Right ventricle myocardium inferior (tissue), 1 donor: ENCODE measurements at regions of chr4 and their contacts with region 1.

Region 1: GRCh38 chr4:138182838-138183426 is 59.2 kb downstream of the SLC7A11 start:
- DNase-seq: no peak
- ATAC-seq: peak; percentile 44

Region 2: DNA sequence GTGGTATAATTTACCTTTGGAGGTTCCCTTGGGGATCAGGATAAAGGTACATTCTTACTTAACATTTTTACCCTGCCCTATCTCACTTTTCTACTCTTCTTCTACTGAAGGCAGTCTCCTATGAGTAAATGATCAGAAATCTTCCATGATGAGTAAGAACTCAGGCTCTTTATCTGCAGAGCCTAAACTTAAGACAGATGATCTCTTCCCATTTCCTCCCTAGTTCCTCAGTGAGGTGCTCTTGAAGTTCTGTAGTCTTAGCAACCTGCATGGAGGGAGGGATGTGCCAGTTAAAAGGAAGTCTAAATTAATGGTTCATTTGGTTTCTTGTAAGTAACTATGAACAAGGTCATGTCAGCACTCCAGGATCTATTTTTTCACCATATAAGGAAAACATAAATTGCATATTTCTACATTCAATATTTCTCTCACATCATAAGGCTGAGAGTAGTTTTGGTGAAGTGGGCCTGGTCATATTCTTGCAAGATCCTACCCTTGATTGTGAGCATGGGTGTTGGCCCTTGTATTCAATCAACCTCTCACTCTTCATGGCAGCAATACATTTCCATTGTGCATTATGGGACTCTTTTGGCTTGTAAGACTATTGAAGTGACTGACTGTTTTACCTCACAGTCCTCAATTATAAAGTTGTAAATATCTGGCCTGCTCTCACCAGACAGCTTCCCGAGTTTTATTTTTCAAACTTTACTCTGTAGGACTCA is 236.3 kb before region 1 on chr4:
- intact Hi-C with region 1: no loop called
- DNase-seq: no peak
- ATAC-seq: no peak

Region 3: GRCh38 chr4:138494931-138495330 is 312.0 kb after region 1 on chr4:
- intact Hi-C with region 1: loop called (anchors 5 kb)
- DNase-seq: no peak
- ATAC-seq: peak; percentile 60